Dorsolateral prefrontal cortex (tissue), 120 donors: ENCODE measurements at regions of chrX and their contacts with region 1.

Region 1: GRCh38 chrX:50812995-50813826 is 783 bp downstream of the SHROOM4 start:
- DNase-seq: peak in 5 of 10 donors; percentile 5 to 45 (median 41)
- H3K4me3 ChIP-seq: peak overlapping the region; percentile 20 to 76 (median 59)
- H3K27ac ChIP-seq: peak overlapping the region in 58 of 59 donors; percentile 38 to 96 (median 88)
- H3K27me3 ChIP-seq: peaks cover 0 to 74% (median 15%) of the 10 kb centered on the region in 45 donors
- CTCF ChIP-seq: no peak

Region 2: GRCh38 chrX:50747471-50747900 is 65.7 kb before region 1 on chrX:
- intact Hi-C with region 1: loop called (anchors 2 to 5 kb)
- DNase-seq: no peak
- H3K4me3 ChIP-seq: no peak overlapping the region
- H3K27ac ChIP-seq: peak overlapping the region in 9 of 59 donors; percentile 16 to 76 (median 68)
- H3K27me3 ChIP-seq: peaks cover 0 to 81% (median 27%) of the 10 kb centered on the region in 45 donors
- CTCF ChIP-seq: peak in 55 of 56 donors; percentile 45 to 81 (median 63)

Region 3: DNA sequence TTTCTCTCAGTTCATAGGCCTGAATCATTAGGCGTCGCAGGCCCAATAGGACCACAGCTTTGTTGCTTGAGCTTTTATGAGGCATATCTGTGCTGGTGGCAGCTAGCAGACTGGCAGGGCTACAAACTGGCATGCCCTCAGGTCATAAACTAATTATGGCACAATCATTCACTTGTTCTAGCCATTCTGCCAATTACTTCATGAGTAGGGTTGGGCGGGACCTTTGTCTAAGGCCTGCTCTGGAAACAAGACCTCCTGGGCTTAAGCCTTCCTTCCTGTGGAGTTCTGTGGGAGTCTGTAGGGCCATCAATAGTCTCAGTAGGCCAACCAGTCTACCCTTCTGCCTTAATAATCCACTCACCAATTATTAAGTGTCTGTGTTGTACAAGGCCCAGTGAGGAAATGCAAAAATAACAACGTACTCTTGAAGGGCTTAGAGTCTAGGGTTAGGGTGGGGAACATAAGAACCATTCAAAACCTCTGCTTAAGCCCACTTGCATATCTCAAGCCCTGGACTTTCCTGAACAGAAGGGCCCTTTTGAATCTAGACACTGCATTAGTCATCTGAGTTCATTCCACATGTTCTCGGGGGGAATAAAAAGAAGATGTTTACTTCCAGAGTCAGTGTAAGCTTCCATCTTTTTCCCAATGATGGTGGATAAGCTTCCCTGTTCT is 43.7 kb before region 1 on chrX:
- intact Hi-C with region 1: loop called in 1 of 2 experiments (anchors 5 kb)
- DNase-seq: peak in 9 of 10 donors; percentile 22 to 76 (median 47)
- H3K4me3 ChIP-seq: no peak overlapping the region
- H3K27ac ChIP-seq: peak overlapping the region in 44 of 59 donors; percentile 1 to 80 (median 56)
- H3K27me3 ChIP-seq: peaks cover 0 to 81% (median 30%) of the 10 kb centered on the region in 45 donors
- CTCF ChIP-seq: no peak

Region 4: DNA sequence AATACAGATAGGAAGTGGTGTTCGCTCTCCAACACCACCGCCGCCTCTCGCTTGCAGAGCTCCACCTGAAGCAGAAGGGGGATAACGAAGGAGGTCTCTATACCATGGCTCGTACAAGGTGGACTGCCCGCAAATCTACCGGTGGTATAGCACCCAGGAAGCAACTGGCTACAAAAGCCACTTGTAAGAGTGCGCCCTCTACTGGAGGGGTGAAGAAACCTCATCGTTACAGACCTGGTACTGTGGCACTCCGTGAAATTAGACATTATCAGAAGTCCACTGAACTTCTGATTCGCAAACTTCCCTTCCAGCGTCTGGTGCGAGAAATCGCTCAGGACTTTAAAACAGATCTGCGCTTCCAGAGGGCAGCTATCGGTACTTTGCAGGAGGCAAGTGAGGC is 92.1 kb after region 1 on chrX:
- intact Hi-C with region 1: loop called in 1 of 2 experiments (anchors 1 kb)
- DNase-seq: no peak
- H3K4me3 ChIP-seq: no peak overlapping the region
- H3K27ac ChIP-seq: no peak overlapping the region
- H3K27me3 ChIP-seq: peaks cover 0 to 91% (median 34%) of the 10 kb centered on the region in 45 donors
- CTCF ChIP-seq: peak in 10 of 56 donors; percentile 9 to 27 (median 20)